K562 (cell line): ENCODE measurements at regions of chr4 and their contacts with region 1.

Region 1: GRCh38 chr4:121696581-121697461 is at the start of gene ANXA5:
- DNase-seq: peak; percentile 91 to 94 (median 91)
- ATAC-seq: peak; percentile 98
- H3K4me3 ChIP-seq: peak within 1 kb of the TSS; percentile 87
- H3K27ac ChIP-seq: peak within 1 kb of the TSS; percentile 78
- H3K4me1 ChIP-seq: peaks cover 2 to 20% of the 10 kb centered on the region in 2 experiments; a peak in 4 of 5 replicates
- H3K27me3 ChIP-seq: peaks cover 0 to 7% of the 10 kb centered on the region in 2 experiments; a peak in 2 of 5 replicates
- CTCF ChIP-seq: peak; percentile 57 to 76 (median 70)
- EP300 ChIP-seq: no peak; the same call in 1 of the 2 replicates
- POLR2A ChIP-seq: peak; percentile 85
- RAD21 ChIP-seq: peak; percentile 74 to 91
- polyA plus RNA-seq, gene ANXA5: 85.9 to 131 TPM

Region 2: DNA sequence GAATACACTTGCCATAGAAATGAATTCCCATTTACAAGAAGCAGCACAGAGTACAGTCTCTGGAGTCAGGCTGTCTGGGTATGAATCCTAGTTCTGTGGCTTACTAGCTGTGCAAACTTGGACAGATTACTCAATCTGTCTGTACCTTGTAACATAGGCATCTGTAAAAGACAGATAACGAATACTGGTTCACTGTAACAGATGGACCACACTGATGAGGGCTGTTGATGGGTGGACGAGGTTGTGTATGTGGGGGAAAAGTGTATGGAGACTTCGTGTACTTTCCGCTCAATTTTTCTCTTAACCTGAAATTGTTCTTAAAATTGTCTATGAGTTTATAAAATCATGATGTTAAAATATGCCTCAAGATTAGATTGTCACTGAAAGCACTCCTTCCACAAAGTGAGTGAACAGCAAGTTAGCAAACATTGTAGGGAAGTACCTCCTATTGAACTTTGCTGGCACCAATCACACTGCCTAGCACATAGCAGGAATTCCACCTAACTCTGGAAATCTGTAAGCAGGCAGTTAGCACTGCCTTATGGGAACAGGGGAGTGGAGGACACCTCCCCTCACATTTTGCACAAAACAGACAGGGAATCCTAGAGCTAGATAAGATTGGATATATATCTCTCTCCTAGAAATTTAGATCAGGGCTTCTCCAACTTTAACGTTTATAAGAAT is 97.8 kb after region 1 on chr4:
- CTCF ChIA-PET with region 1: no interaction called
- POLR2A ChIA-PET with region 1: interaction called, 3 read pairs
- in situ Hi-C with region 1: no loop called
- intact Hi-C with region 1: loop called (anchors 2 kb)
- DNase-seq: peak; percentile 78 to 87 (median 85)
- ATAC-seq: peak; percentile 93
- H3K4me3 ChIP-seq: no peak overlapping the region
- H3K27ac ChIP-seq: peak overlapping the region; percentile 39; the same call in 1 of the 3 replicates
- H3K4me1 ChIP-seq: peaks cover 5 to 39% of the 10 kb centered on the region in 2 experiments; a peak in 3 of 5 replicates
- H3K27me3 ChIP-seq: no peaks in the 10 kb centered on the region
- CTCF ChIP-seq: no peak
- EP300 ChIP-seq: peak; percentile 98
- POLR2A ChIP-seq: no peak
- RAD21 ChIP-seq: no peak

Region 3: GRCh38 chr4:121989715-121990114 is 292.9 kb after region 1 on chr4:
- CTCF ChIA-PET with region 1: no interaction called
- POLR2A ChIA-PET with region 1: no interaction called
- in situ Hi-C with region 1: no loop called
- intact Hi-C with region 1: no loop called
- DNase-seq: peak; percentile 78 to 85 (median 82)
- ATAC-seq: peak; percentile 80
- H3K4me3 ChIP-seq: no peak overlapping the region
- H3K27ac ChIP-seq: peak overlapping the region; percentile 19
- H3K4me1 ChIP-seq: peaks cover 4 to 28% of the 10 kb centered on the region in 2 experiments; a peak in 3 of 5 replicates
- H3K27me3 ChIP-seq: no peaks in the 10 kb centered on the region
- CTCF ChIP-seq: no peak
- EP300 ChIP-seq: no peak
- POLR2A ChIP-seq: no peak
- RAD21 ChIP-seq: no peak